Activated B cell treated with CpG ODN at 0.5 μM for 24 hours (primary cell): ENCODE measurements at regions of chr1 and their contacts with region 1.

Region 1: GRCh38 chr1:44775078-44775929 is at the start of gene RPS8:
- DNase-seq: peak; percentile 84
- ATAC-seq: peak; percentile 82
- H3K4me3 Mint-ChIP-seq: peak within 1 kb of the TSS; percentile 98
- H3K27ac Mint-ChIP-seq: peak within 1 kb of the TSS; percentile 99
- H3K4me1 Mint-ChIP-seq: peaks cover 40% of the 10 kb centered on the region
- H3K27me3 Mint-ChIP-seq: no peaks in the 10 kb centered on the region
- CTCF ChIP-seq: no peak
- total RNA-seq, gene RPS8: 3,767 and 4,240 TPM in 2 replicates

Region 2: GRCh38 chr1:44674113-44675000 is 100.9 kb before region 1 on chr1 and contains the starts of genes ARMH1 and TMEM53:
- CTCF ChIA-PET with region 1: no interaction called
- POLR2A ChIA-PET with region 1: interaction called, 11 read pairs
- intact Hi-C with region 1: no loop called
- DNase-seq: peak; percentile 98
- ATAC-seq: peak; percentile 90
- H3K4me3 Mint-ChIP-seq: peak within 1 kb of the TSS; percentile 87
- H3K27ac Mint-ChIP-seq: peak within 1 kb of the TSS; percentile 93
- H3K4me1 Mint-ChIP-seq: peaks cover 32% of the 10 kb centered on the region
- H3K27me3 Mint-ChIP-seq: no peaks in the 10 kb centered on the region
- CTCF ChIP-seq: no peak
- total RNA-seq, gene ARMH1: 18.1 and 19.9 TPM in 2 replicates
- total RNA-seq, gene TMEM53: 4.6 and 4.8 TPM in 2 replicates

Region 3: DNA sequence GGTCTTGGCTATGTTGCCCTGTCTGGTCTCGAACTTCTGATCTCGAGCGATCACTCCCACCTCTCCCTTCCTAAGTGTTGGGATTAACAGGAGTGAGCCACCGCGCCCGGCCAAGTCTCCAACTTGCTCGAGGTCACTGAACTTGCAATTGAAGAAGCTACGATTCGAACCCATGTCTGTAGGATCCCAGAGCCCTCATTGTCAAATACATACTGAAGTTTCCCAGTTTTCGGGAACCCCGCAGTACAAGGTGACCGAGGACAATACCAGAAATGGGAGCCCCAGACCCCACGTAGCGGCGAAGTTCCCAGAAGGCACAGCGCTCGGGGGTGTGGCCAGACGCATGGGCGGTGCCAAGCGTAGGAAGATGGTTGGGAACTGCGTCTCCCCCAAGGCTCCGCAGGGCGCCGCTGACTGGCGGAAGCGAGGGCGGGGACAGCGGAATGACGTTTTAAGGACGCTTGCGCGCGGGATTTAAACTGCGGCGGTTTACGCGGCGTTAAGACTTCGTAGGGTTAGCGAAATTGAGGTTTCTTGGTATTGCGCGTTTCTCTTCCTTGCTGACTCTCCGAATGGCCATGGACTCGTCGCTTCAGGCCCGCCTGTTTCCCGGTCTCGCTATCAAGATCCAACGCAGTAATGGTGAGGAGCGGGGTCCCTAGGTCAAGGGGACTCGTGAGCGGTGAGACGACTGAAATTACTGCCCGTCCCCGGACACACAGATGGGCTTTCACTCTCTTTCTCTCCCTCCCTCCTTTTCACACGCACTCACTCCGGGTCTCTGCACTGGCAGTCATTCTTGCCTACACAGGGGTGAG is 35.7 kb before region 1 on chr1 and contains the start of gene KIF2C:
- CTCF ChIA-PET with region 1: interaction called, 3 read pairs
- POLR2A ChIA-PET with region 1: interaction called, 149 read pairs
- intact Hi-C with region 1: loop called (anchors 1 kb)
- DNase-seq: peak; percentile 94
- ATAC-seq: peak; percentile 100
- H3K4me3 Mint-ChIP-seq: peak within 1 kb of the TSS; percentile 93
- H3K27ac Mint-ChIP-seq: peak within 1 kb of the TSS; percentile 90
- H3K4me1 Mint-ChIP-seq: peaks cover 15% of the 10 kb centered on the region
- H3K27me3 Mint-ChIP-seq: no peaks in the 10 kb centered on the region
- CTCF ChIP-seq: no peak
- total RNA-seq, gene KIF2C: 1.00 and 1.8 TPM in 2 replicates

Region 4: DNA sequence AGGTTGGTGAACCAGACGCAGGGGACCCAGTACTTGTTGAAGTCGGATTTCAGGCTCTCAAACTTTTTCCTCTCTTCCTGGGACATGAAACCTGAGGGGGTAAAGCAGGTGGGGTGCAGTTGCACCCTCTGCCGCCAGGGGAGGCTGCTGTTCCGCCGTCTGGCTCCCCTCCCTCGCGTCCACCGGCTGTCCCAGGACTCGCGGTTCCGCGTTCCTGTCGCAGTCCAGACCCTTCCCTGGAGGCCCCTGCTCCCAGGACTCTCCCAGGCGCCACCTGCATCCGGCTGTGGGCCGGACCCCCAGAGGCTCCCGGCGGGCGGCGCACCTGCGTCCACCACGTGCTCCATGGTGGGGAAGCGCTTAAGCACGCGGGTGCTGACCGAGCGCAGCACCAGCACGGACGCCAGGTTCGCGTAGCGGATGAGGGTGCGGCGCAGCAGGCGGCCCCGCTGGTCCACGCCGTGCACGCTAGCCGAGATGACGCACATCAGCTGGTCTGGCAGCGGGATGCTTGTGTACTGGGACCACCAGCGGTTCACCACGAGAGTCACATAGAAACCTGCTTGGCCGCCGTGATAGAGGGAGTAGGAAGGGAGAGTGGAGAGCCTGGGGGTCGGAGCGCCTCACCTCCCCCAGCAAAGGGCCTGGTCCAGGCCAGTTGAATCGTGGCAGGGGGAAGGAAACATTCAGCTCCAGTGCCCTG is 11.0 kb after region 1 on chr1:
- CTCF ChIA-PET with region 1: interaction called, 3 read pairs
- POLR2A ChIA-PET with region 1: interaction called, 103 read pairs
- intact Hi-C with region 1: loop called (anchors 1 kb)
- DNase-seq: peak; percentile 81
- ATAC-seq: peak; percentile 79
- H3K4me3 Mint-ChIP-seq: peak overlapping the region; percentile 75
- H3K27ac Mint-ChIP-seq: peak overlapping the region; percentile 86
- H3K4me1 Mint-ChIP-seq: peaks cover 32% of the 10 kb centered on the region
- H3K27me3 Mint-ChIP-seq: no peaks in the 10 kb centered on the region
- CTCF ChIP-seq: peak; percentile 100

Region 5: DNA sequence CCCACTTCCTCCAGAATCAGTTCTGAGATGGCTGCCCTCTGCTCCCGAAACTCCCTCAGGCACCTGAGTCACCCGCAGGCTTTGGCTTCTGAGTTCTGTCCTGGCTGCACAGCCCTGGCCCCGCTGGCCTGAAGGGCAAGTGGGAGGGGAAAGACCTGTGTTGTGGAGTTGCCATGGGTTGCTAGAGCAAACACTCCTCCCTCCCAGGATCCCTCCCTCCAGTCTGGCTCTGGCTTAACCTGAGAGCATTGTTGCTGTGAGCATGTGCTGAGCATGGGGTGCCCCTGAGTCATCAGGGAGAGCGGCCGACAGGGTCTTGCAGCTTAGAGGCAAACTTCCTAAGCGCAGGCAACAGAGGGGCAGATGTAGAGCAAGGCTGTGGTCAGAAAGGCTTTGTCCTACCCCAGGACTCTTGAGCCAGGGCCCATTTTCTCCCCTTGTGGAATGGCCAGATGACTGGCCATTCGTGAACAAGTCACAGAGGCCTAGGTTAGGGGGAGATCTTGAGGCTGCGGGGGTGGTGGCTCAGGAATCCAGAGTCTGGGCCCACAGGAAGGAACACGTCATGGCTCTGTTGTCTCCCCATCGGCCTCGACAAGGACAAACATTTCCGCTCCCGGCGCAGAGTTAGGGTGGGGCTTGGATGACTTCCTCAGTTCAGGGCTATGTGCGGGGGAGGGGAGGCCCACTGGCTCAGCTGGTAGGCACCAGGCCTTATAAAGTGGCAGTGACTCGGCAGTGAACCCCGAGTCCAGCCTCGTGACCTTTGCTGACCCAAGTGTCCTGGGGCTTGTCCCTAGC is 32.2 kb after region 1 on chr1 and contains the start of gene DYNLT4:
- CTCF ChIA-PET with region 1: no interaction called
- POLR2A ChIA-PET with region 1: interaction called, 42 read pairs
- intact Hi-C with region 1: no loop called
- DNase-seq: peak; percentile 67
- ATAC-seq: peak; percentile 32
- H3K4me3 Mint-ChIP-seq: peak within 1 kb of the TSS; percentile 63
- H3K27ac Mint-ChIP-seq: peak within 1 kb of the TSS; percentile 97
- H3K4me1 Mint-ChIP-seq: peaks cover 67% of the 10 kb centered on the region
- H3K27me3 Mint-ChIP-seq: no peaks in the 10 kb centered on the region
- CTCF ChIP-seq: no peak
- total RNA-seq, gene DYNLT4: not detected in 2 replicates

Region 6: GRCh38 chr1:44867801-44868200 is 92.5 kb after region 1 on chr1:
- CTCF ChIA-PET with region 1: no interaction called
- POLR2A ChIA-PET with region 1: no interaction called
- intact Hi-C with region 1: no loop called
- DNase-seq: no peak
- ATAC-seq: no peak
- H3K4me3 Mint-ChIP-seq: no peak overlapping the region
- H3K27ac Mint-ChIP-seq: no peak overlapping the region
- H3K4me1 Mint-ChIP-seq: no peaks in the 10 kb centered on the region
- H3K27me3 Mint-ChIP-seq: no peaks in the 10 kb centered on the region
- CTCF ChIP-seq: no peak

Region 7: GRCh38 chr1:44962729-44963128 is 187.4 kb after region 1 on chr1:
- CTCF ChIA-PET with region 1: no interaction called
- POLR2A ChIA-PET with region 1: no interaction called
- intact Hi-C with region 1: no loop called
- DNase-seq: no peak
- ATAC-seq: no peak
- H3K4me3 Mint-ChIP-seq: no peak overlapping the region
- H3K27ac Mint-ChIP-seq: no peak overlapping the region
- H3K4me1 Mint-ChIP-seq: no peaks in the 10 kb centered on the region
- H3K27me3 Mint-ChIP-seq: no peaks in the 10 kb centered on the region
- CTCF ChIP-seq: no peak

Region 8: GRCh38 chr1:44985747-44986359 is 210.5 kb after region 1 on chr1:
- CTCF ChIA-PET with region 1: no interaction called
- POLR2A ChIA-PET with region 1: interaction called, 12 read pairs
- intact Hi-C with region 1: no loop called
- DNase-seq: no peak
- ATAC-seq: no peak
- H3K4me3 Mint-ChIP-seq: peak overlapping the region; percentile 100
- H3K27ac Mint-ChIP-seq: peak overlapping the region; percentile 94
- H3K4me1 Mint-ChIP-seq: peaks cover 23% of the 10 kb centered on the region
- H3K27me3 Mint-ChIP-seq: no peaks in the 10 kb centered on the region
- CTCF ChIP-seq: no peak